ENCODE measurements at regions of chr7 and their contacts with region 1.

Region 1: DNA sequence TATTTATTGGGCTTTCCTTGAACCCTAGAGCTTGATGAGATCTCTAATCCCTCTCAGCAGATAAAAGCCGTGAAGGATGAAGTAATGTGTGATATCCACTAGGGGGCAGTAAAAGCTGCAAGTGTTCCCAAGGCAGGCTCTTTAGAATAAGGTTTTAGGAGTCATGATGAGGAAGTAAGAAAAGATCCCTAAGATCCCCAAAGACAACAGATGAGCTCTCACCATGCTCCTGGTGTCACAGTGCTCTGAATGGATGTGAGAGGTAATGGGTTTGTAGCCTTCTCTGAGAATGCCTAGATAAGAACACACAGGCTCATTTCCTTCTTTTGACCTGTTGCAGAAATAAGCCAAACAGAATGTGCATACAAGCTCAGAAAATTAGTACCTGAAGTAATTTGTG is 70.4 kb upstream of the ITPRID1 start:
- DNase-seq: no peak
- H3K4me3 ChIP-seq: no peak overlapping the region
- H3K27ac ChIP-seq: no peak overlapping the region
- H3K4me1 ChIP-seq: no peaks in the 10 kb centered on the region
- H3K27me3 ChIP-seq: peaks cover 60% of the 10 kb centered on the region
- CTCF ChIP-seq: peak; percentile 86

Region 2: DNA sequence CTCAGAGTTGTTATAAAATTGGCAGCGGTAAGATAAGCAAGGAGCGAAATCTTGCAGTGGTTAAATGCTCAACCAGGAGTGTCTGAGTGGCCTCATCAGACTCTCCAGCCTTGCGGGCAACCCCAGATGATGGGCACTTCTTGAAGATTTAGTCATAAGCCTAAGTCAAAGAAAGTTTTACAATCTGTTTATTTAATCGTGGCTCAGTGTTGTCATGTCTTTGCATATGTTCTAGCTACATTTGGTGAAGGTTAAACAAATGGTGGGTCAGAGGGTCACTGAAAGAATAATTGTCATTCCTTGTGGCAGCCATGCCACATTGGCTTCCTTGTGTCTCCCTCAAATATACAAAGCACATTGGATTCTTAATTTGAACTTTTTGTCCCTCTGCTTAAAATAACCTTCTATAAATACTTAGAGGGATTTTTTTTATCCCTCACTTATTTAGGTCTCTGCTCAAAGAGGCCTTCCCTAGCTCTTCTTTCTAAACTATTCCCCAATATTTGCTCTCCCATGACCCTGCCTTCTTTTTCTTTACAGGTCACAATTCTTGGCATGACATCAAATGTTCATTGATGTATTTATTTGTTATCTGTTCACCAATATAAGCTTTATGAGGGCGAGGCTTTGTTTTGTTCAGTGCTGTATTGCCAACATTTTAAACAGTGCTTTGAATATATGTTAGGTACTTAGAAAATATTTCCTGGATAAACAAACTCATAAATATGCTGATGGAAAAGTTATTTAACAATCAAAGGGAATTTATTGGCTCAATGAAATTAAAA is 171.6 kb before region 1 on chr7:
- intact Hi-C with region 1: no loop called
- DNase-seq: no peak
- H3K4me3 ChIP-seq: no peak overlapping the region
- H3K27ac ChIP-seq: no peak overlapping the region
- H3K4me1 ChIP-seq: peaks cover 9% of the 10 kb centered on the region
- H3K27me3 ChIP-seq: peaks cover 10% of the 10 kb centered on the region
- CTCF ChIP-seq: no peak

Region 3: GRCh38 chr7:31735991-31736982 is 292.8 kb after region 1 on chr7:
- intact Hi-C with region 1: loop called (anchors 10 kb)
- DNase-seq: peak; percentile 20
- H3K4me3 ChIP-seq: no peak overlapping the region
- H3K27ac ChIP-seq: no peak overlapping the region
- H3K4me1 ChIP-seq: no peaks in the 10 kb centered on the region
- H3K27me3 ChIP-seq: no peaks in the 10 kb centered on the region
- CTCF ChIP-seq: peak; percentile 90

Measured in left ventricle myocardium inferior (tissue), 1 donor.